Dendritic cell treated with granulocyte-macrophage colony-stimulating factor and Interleukin-4, amounts not matched to agents 40 ng/mL and 50 ng/mL, for 4 days (primary cell): ENCODE measurements at regions of chrX and their contacts with region 1.

Region 1: GRCh38 chrX:132463411-132463810 is 25.4 kb downstream of the MBNL3 start:
- H3K4me3 Mint-ChIP-seq: no peak overlapping the region
- H3K27ac Mint-ChIP-seq: no peak overlapping the region
- H3K4me1 Mint-ChIP-seq: no peaks in the 10 kb centered on the region
- H3K27me3 Mint-ChIP-seq: no peaks in the 10 kb centered on the region

Region 2: DNA sequence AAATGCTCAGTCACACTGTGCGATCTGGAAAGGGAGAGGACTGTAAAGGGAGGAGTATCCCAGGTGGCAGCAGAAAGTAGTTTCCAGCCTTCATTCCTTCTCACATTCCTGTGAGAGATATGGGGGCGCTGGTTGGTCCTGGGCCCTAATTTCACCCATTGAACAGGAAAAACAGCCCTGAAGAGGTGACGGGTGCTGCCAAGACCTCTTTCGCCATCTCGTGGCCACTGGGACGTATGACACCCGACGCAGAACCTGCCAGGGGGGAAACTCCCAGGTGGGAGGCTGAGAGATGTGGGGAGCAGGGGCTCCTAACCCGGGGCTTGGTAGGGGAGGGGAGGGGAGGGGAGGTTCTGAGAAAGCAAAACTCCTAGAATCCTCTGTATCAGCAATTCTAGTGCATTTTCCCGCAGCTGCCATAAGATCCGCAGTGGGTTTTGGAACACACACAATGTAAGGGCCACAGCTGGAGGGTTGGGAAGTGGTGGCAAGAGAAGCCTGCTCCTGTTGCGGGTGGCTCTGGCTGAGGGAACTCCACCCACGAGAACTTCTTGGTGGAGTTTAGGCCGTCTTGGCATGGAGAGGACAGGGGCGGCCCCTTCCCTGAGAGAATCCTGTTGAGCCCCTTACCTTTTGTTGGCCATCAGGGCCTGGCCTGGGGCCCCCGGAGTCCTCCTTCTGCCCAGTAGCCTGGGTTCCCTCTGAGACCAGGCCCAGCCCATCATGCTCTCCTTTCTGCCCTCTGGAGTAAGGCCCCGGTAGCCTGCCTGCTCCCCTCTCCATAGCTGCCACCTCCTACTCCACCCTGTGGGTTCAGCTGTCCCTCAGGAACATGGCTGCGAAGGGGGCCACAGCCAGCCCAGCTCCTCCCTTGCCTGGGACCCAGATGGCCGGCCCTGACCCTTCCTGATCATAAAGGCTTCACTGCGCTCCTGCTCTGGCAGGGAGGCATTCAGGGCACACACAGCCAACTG is 785.5 kb before region 1 on chrX:
- intact Hi-C with region 1: no loop called
- H3K4me3 Mint-ChIP-seq: no peak overlapping the region
- H3K27ac Mint-ChIP-seq: no peak overlapping the region
- H3K4me1 Mint-ChIP-seq: no peaks in the 10 kb centered on the region
- H3K27me3 Mint-ChIP-seq: no peaks in the 10 kb centered on the region

Region 3: GRCh38 chrX:132226169-132226568 is 237.2 kb before region 1 on chrX:
- intact Hi-C with region 1: loop called (anchors 10 kb)
- H3K4me3 Mint-ChIP-seq: no peak overlapping the region
- H3K27ac Mint-ChIP-seq: no peak overlapping the region
- H3K4me1 Mint-ChIP-seq: no peaks in the 10 kb centered on the region
- H3K27me3 Mint-ChIP-seq: no peaks in the 10 kb centered on the region

Region 4: DNA sequence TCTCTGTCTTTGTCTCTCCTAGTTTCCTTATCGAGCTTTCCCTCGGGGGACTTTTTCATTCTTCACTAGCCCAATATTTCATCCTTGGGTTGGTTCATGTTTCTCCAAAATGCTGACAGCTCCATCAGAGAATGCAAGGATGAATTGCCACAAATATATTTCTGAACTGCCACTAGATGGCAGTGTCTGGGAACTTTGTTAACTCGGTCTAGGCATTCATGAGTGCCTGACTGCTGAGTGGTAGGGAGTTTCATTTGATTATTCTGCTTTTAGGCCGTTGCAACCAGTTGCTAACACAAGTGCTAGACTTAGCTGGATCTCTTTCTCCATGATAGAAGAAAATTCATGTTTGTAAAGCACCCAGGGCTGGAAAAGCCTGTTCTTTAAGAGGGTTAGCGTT is 170.6 kb before region 1 on chrX:
- intact Hi-C with region 1: loop called (anchors 2 kb)
- H3K4me3 Mint-ChIP-seq: no peak overlapping the region
- H3K27ac Mint-ChIP-seq: no peak overlapping the region
- H3K4me1 Mint-ChIP-seq: no peaks in the 10 kb centered on the region
- H3K27me3 Mint-ChIP-seq: no peaks in the 10 kb centered on the region